ENCODE measurements at regions of chr6 and their contacts with region 1.

Region 1: DNA sequence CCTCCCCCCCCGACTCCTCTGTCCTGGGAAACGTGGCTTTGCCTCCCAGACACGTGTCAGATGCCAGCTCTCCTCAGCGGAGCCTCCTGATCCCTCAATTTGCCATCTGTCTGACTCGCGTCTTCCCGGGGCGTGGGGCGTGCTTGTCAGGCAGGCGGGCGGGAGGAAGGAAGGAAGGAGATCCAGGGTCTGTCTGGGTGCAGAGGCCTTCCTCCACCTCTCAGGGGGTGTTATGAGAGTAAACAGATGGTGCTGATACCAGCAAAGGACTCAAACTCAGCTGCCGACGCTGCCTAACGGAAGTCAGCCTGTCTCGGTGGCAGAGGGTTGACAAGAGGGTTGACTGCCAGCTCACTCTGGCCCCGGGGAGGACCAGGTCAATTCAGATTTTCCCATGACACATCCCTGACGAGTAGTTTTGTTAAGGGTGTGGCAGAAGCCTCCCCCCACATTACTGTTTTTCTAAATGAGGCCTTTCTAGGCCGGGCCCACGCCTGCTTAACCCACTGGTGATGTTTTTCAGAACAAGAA is 17.0 kb downstream of the UQCC2 start:
- DNase-seq: peak; percentile 82
- H3K4me3 Mint-ChIP-seq: peak overlapping the region; percentile 54
- H3K27ac Mint-ChIP-seq: peak overlapping the region; percentile 87
- H3K4me1 Mint-ChIP-seq: peaks cover 57% of the 10 kb centered on the region
- H3K27me3 Mint-ChIP-seq: no peaks in the 10 kb centered on the region

Region 2: GRCh38 chr6:33589731-33590530 is 104.5 kb before region 1 on chr6:
- intact Hi-C with region 1: no loop called
- DNase-seq: peak; percentile 83
- H3K4me3 Mint-ChIP-seq: no peak overlapping the region
- H3K27ac Mint-ChIP-seq: no peak overlapping the region
- H3K4me1 Mint-ChIP-seq: peaks cover 32% of the 10 kb centered on the region
- H3K27me3 Mint-ChIP-seq: peaks cover 2% of the 10 kb centered on the region

Region 3: GRCh38 chr6:33633462-33634158 is 60.9 kb before region 1 on chr6:
- intact Hi-C with region 1: loop called (anchors 5 kb)
- DNase-seq: peak; percentile 90
- H3K4me3 Mint-ChIP-seq: peak overlapping the region; percentile 85
- H3K27ac Mint-ChIP-seq: peak overlapping the region; percentile 85
- H3K4me1 Mint-ChIP-seq: peaks cover 53% of the 10 kb centered on the region
- H3K27me3 Mint-ChIP-seq: no peaks in the 10 kb centered on the region

Region 4: GRCh38 chr6:34044945-34045595 is 350.6 kb after region 1 on chr6:
- intact Hi-C with region 1: no loop called
- DNase-seq: no peak
- H3K4me3 Mint-ChIP-seq: no peak overlapping the region
- H3K27ac Mint-ChIP-seq: no peak overlapping the region
- H3K4me1 Mint-ChIP-seq: peaks cover 9% of the 10 kb centered on the region
- H3K27me3 Mint-ChIP-seq: peaks cover 2% of the 10 kb centered on the region

Measured in activated CD4-positive, alpha-beta T cell treated with anti-CD3 and anti-CD28 coated beads, Interleukin-2, amount 10 ng/mL, durations not matched to agents 24 days and 14 days (primary cell).